OCI-LY7 (cell line): ENCODE measurements at regions of chr3 and their contacts with region 1.

Region 1: DNA sequence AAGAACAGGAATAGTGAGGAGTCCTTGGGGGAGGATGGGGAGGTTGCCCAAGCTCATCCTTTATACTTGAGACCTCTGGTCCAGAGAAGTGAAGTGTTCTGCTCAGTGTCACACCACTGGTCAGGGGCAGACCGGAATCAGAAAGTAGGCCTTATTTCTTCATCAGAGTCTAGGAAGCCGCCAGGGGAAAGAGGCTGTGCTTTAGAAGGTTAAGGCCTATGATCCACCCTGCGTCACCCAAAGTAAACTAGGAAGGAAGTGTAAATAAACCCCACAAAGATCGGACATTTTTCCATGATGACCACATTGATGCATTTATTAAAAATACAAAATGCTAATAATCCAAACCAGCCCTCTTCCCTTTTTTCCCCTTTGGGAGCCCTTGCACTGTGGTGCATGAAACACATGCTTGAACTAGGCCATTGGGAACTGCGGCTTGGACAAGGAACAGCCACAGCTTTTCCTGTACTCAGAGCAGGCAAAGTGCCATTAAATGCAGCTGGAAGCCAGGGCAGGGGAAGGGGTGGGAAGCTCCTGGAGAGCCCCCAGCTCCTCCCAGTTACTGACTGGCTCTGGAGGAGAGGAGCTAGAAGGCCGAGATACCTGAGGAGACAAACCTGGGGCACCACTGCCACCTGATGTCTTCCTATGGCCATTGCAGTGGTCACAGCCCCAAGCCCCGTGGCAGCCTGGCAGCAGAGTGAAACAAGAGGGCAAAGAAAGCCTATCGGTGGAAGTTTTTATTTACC is 37.0 kb downstream of the CDC25A start:
- DNase-seq: peak; percentile 68
- H3K4me3 ChIP-seq: no peak overlapping the region
- H3K27ac ChIP-seq: no peak overlapping the region
- H3K4me1 ChIP-seq: no peaks in the 10 kb centered on the region
- CTCF ChIP-seq: peak; percentile 89

Region 2: DNA sequence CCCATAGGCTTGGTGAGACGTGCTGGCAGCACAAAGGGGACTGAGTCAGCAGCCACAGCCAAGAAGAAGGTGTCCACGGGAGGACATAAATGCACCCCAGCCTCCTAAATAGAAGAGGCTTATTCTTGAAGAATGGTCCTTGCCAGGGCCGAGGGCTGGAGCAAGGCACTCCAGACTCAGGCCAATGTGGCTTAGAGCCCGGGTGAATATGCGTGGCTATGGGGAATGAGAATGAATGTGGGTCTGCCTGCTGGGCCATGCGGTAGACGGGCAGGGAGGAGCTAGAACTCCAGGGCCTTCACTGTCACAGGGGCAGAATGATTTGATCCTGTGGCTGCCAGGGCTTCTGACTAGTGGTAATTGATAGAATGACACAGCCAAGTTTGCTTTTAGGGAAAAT is 314.2 kb before region 1 on chr3:
- CTCF ChIA-PET with region 1: interaction called, 3 read pairs
- POLR2A ChIA-PET with region 1: no interaction called
- intact Hi-C with region 1: loop called (anchors 1 kb)
- DNase-seq: no peak
- H3K4me3 ChIP-seq: no peak overlapping the region
- H3K27ac ChIP-seq: no peak overlapping the region
- H3K4me1 ChIP-seq: no peaks in the 10 kb centered on the region
- CTCF ChIP-seq: no peak

Region 3: DNA sequence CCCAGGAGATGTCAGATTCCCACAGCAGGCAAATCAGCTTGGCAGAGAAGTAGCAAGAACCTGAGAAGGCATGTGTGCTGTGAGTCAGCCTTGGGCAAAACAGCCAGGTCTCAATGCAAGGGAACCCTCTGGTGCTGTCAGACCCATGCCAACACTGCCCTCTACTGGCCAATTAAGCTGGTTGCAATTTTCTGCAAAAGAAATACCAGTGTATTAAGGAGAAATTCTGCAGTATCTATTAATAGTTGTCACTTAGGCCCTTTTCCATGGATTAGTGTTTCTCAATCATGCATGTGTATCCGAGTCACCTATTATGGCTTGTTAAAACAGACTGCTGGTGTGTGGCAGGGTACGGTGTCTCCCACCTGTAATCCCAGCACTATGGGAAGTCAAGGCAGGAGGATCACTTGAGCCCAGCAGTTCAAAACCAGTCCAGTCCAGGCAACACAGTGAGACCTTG is 161.2 kb before region 1 on chr3:
- CTCF ChIA-PET with region 1: interaction called, 3 read pairs
- POLR2A ChIA-PET with region 1: no interaction called
- intact Hi-C with region 1: loop called (anchors 1 kb)
- DNase-seq: peak; percentile 83
- H3K4me3 ChIP-seq: no peak overlapping the region
- H3K27ac ChIP-seq: no peak overlapping the region
- H3K4me1 ChIP-seq: no peaks in the 10 kb centered on the region
- CTCF ChIP-seq: peak; percentile 98

Region 4: DNA sequence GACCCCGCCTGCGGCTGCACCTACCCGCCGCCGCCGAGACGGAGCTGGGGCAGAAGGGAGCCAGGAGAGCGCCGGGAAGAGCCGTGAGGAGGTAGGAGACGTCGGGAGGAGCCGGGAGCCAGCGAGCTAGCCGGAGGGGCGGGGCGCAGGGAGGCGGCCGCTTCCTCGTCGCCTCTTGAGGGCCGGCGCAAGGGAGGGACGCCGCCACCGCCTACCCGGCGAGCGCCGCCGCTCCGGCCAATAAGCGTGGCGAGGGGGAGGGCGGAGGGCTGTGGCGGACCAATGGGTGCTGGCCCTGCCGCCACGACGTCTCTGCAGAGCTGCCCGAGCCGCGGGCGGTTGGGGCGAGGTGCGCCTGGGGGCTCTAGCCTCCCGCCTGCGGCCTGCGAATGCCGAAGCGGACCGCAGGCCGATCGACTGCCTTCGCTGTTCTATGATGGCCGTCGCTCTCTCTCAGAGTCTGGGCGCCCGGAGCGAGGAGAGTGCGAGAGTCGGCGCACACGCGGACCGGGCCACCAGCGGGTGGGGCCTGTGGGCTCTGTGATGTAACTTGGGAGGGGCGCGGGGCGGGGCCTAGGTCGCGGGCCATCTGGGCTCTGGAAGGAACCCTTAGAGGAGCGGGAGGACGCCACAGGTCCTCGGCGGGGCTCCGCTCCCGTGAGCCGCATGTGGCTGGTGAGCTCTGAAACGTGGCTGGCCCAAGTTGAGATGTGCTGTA is 62.3 kb before region 1 on chr3:
- CTCF ChIA-PET with region 1: no interaction called
- POLR2A ChIA-PET with region 1: interaction called, 6 read pairs
- intact Hi-C with region 1: loop called (anchors 5 kb)
- DNase-seq: peak; percentile 96
- H3K4me3 ChIP-seq: peak overlapping the region; percentile 83
- H3K27ac ChIP-seq: peak overlapping the region; percentile 81
- H3K4me1 ChIP-seq: peaks cover 19% of the 10 kb centered on the region
- CTCF ChIP-seq: no peak